Cardiac septum (tissue), 1 donor: ENCODE measurements at regions of chr5 and their contacts with region 1.

Region 1: GRCh38 chr5:145834917-145835847 is at the start of gene PRELID2:
- DNase-seq: peak; percentile 92
- total RNA-seq, gene PRELID2: 10.5 TPM

Region 2: DNA sequence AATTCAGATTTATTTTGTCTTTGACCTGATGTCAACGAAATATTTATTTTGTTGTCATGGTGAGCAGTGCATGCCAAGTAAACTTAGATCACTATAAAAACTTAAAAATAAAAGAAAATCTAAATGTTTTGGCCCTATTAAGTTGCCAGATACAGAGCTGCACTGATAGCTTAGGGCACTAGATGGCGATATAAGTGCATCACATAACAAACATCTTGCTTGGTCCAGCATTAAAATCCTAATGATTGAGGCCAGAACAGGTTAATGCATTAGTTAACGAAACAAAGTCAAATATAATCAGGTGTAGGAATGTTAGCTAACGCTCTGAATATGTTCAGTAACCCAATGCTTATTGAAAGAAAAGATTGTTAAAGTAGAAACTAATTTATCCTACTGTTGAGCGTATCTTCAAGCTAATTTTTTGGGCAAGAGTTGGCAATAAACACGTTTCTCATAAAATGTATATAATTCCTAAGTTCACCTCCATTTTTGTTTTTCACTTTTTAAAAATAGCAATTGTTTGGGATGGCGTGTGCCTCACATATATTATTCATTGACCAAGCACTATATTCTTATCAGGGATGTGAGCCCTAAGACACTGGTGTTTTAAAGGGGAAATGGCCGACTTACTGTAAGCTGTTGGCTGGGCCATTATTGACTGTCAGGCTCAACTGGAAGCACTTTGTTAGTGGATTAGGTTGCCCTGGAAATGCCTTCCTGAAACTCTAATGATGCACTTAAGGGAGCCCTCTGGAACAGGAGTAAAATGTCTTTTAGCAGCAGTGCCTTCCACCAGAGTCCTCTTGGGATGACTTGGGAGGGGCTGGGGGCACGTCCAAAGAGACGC is 1631.2 kb before region 1 on chr5:
- intact Hi-C with region 1: loop called (anchors 10 kb)
- DNase-seq: no peak

Region 3: DNA sequence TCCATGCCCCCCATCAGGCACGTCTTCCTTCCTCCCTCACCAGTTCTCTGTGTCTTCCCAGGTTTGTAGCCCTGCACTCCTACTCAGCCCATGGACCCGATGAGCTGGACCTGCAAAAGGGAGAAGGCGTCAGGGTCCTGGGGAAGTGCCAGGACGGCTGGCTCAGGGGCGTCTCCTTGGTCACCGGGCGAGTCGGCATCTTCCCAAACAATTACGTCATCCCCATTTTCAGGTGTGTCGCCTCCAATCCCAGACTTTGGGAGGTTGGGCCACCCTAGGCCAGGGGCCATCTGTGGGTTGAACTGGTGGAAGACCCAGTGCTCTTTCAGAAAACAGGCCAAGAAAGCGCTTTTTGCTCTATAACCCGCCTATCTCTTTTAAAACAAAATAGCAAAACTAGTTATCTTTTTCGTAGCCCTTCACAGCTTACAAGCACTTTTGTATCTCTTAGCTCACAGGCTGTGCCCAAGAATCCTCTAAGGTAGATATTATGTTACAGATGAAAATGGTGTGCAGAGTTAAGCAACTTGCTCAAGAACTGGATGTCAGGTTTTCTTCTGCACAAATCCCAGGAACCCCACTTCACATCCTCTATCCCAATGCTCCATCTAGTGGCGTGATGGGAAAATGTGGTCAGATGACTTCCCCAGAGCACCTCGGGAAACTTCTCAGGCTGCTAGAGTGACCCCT is 214.0 kb after region 1 on chr5:
- intact Hi-C with region 1: loop called (anchors 5 kb)
- DNase-seq: no peak

Region 4: GRCh38 chr5:146130440-146131045 is 295.4 kb after region 1 on chr5:
- intact Hi-C with region 1: loop called (anchors 10 kb)
- DNase-seq: no peak

Region 5: DNA sequence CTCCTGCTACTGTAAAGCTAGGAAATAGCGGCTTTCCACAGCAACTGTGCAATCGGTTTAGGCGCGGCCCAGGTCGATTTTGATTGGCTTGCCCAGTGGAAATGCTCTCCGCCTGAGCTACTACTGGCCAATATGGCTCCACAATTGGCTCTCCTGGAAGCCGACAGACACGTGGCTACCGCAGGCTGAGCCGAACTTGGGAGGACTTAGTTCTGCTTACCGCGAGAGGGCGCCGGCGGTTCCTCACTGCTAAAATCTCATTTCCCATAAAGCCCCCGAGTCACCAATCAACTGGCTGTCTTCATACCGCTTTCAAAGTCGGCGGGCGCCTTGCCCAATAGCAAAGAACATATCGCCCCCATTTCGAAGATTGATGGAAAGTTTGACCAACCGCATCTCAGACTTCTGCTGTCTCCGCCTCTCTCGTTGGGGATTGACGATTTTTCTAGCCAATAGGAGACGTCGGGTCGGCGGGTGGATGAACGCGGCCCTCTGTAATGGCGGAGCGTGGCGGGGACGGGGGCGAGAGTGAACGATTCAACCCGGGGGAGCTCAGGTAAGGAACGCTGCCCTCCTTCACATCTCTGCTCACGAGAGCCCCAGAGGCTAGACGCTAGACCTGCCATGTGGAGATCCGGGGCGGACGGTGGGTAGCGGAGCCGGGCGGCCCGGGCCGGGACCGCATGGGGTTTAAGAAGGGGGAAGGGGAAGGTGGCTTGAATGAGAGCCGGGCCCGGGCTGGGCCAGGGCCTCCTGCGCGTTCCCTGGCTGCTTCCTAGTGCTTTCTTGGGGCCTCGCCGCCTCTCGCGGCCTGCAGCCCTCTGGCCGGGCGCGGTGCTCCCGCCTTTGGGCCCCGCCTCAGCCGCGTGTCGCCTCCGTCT is 611.9 kb after region 1 on chr5 and contains the start of gene TCERG1:
- intact Hi-C with region 1: loop called (anchors 10 kb)
- DNase-seq: peak; percentile 98
- total RNA-seq, gene TCERG1: 33.2 TPM